Activated CD4-positive, alpha-beta T cell treated with anti-CD3 and anti-CD28 coated beads, Interleukin-2, amount 10 ng/mL, durations not matched to agents 24 days and 14 days (primary cell): ENCODE measurements at regions of chr3 and their contacts with region 1.

Region 1: GRCh38 chr3:155854141-155854940 is at the start of gene SLC33A1:
- DNase-seq: peak; percentile 99
- H3K4me3 Mint-ChIP-seq: peak within 1 kb of the TSS; percentile 97
- H3K27ac Mint-ChIP-seq: peak within 1 kb of the TSS; percentile 98
- H3K4me1 Mint-ChIP-seq: peaks cover 31% of the 10 kb centered on the region
- H3K27me3 Mint-ChIP-seq: peaks cover 2% of the 10 kb centered on the region
- total RNA-seq, gene SLC33A1: 27.4 and 28.0 TPM in 2 replicates

Region 2: DNA sequence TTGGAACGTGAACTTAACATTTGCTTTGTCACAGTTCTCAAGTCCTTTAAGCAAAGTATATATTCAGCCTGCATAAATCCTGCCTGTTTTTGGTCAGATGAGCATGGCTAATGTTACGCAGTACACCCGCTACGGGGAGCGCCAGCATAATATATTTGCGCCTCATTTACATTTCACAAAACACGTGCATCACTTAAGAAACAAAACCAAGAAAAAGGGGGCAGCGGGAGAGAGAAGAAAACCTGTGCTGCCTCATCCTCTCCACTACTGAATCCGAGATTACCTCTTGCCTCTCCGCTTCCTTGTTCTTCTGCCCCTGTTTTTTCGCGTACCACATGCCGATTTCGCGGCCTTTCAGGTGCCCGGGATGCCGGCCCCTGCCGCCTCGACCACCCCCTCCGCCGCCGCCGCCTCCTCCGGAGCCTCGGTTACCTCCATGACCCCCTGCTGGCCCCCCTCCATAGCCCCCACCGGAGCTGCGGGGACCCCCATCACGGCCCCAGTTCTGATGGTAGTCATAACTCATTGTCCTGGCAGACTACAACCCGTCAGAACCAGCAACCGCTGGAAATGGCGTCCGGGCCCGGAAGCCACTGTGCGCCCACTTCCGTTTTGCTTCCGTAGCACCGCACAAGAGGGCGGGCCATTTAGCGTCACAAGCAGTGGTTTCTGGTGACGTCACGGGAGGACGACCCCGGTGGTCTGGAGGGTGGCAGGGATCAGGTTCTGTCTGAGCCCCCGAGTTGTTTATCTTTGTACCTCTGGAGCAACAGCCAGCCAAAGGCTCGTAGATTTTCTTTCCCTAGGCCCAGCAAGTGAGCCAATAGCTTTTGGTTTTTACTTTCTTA is 1530.2 kb before region 1 on chr3 and contains the start of gene DHX36:
- intact Hi-C with region 1: loop called (anchors 1 kb)
- DNase-seq: peak; percentile 96
- H3K4me3 Mint-ChIP-seq: peak within 1 kb of the TSS; percentile 92
- H3K27ac Mint-ChIP-seq: peak within 1 kb of the TSS; percentile 98
- H3K4me1 Mint-ChIP-seq: peaks cover 26% of the 10 kb centered on the region
- H3K27me3 Mint-ChIP-seq: peaks cover 4% of the 10 kb centered on the region
- total RNA-seq, gene DHX36: 92.5 and 93.3 TPM in 2 replicates

Region 3: GRCh38 chr3:155805802-155806618 is 48.3 kb before region 1 on chr3 and contains the start of gene C3orf33:
- intact Hi-C with region 1: loop called (anchors 1 kb)
- DNase-seq: peak; percentile 93
- H3K4me3 Mint-ChIP-seq: peak within 1 kb of the TSS; percentile 89
- H3K27ac Mint-ChIP-seq: peak within 1 kb of the TSS; percentile 75
- H3K4me1 Mint-ChIP-seq: peaks cover 10% of the 10 kb centered on the region
- H3K27me3 Mint-ChIP-seq: peaks cover 13% of the 10 kb centered on the region
- total RNA-seq, gene C3orf33: 1.6 and 2.1 TPM in 2 replicates

Region 4: DNA sequence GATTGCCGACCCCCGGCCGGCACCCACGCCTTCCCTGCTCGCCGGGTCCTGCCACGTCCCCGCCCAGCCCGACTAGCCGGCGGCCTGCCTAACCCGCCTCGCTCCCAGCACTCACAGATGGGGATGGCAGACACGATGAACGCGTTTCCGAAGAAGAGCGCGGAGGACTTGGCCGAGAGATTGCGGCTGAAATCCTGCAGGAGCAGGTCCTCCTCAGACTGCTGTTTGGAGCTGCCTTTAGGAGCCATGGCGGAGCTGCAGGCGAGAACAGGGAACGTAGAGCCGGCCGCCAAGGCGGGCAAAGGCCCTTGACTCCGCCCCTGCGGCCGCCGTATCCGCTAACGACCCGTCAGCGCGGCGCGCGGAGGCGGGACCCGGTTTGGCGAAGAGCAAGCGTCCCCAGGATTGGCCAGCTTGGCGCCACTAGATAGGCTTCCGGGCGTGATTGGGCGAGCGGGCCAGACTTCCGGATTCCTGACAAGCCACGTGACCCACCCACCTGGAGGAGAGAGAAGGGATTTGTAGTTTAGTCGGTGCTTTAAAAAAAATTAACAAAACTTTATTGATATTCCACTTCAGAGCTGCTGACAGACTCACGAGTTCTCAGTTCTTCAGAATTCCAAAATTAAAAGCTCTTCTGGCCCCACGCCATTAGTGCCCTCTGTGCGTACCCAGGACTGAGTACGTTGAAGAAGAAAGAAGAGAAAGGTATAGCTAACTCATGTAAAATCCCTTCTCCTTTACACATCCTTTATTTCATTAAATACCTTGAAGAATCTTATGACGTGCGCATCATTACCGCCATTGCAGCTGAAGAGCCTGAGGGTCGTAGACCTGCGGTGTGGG is 700.7 kb after region 1 on chr3 and contains the start of gene SSR3:
- intact Hi-C with region 1: loop called (anchors 1 kb)
- DNase-seq: peak; percentile 100
- H3K4me3 Mint-ChIP-seq: peak within 1 kb of the TSS; percentile 97
- H3K27ac Mint-ChIP-seq: peak within 1 kb of the TSS; percentile 96
- H3K4me1 Mint-ChIP-seq: peaks cover 48% of the 10 kb centered on the region
- H3K27me3 Mint-ChIP-seq: no peaks in the 10 kb centered on the region
- total RNA-seq, gene SSR3: 151 and 153 TPM in 2 replicates

Region 5: GRCh38 chr3:157174649-157175498 is 1320.5 kb after region 1 on chr3:
- intact Hi-C with region 1: loop called (anchors 5 kb)
- DNase-seq: peak; percentile 99
- H3K4me3 Mint-ChIP-seq: peak overlapping the region; percentile 89
- H3K27ac Mint-ChIP-seq: peak overlapping the region; percentile 99
- H3K4me1 Mint-ChIP-seq: peaks cover 25% of the 10 kb centered on the region
- H3K27me3 Mint-ChIP-seq: peaks cover 2% of the 10 kb centered on the region